ENCODE measurements at regions of chr3 and their contacts with region 1.

Region 1: GRCh38 chr3:179147873-179148615 is at the start of gene PIK3CA:
- DNase-seq: peak; percentile 87 to 99
- ATAC-seq: peak; percentile 80 to 93 (median 85)
- H3K4me3 ChIP-seq: peak within 1 kb of the TSS; percentile 72
- H3K4me3 Mint-ChIP-seq: peak within 1 kb of the TSS; percentile 98
- H3K27ac ChIP-seq: peak within 1 kb of the TSS; percentile 85
- H3K27ac Mint-ChIP-seq: no peak within 1 kb of the TSS
- H3K4me1 ChIP-seq: no peaks in the 10 kb centered on the region
- H3K4me1 Mint-ChIP-seq: peaks cover 30 to 34% of the 10 kb centered on the region in 2 donors
- H3K27me3 ChIP-seq: peaks cover 2% of the 10 kb centered on the region
- H3K27me3 Mint-ChIP-seq: peaks cover 4 to 8% of the 10 kb centered on the region in 2 donors
- CTCF ChIP-seq: no peak
- total RNA-seq, gene PIK3CA: 37.1 to 40.9 (median 40.2) TPM

Region 2: DNA sequence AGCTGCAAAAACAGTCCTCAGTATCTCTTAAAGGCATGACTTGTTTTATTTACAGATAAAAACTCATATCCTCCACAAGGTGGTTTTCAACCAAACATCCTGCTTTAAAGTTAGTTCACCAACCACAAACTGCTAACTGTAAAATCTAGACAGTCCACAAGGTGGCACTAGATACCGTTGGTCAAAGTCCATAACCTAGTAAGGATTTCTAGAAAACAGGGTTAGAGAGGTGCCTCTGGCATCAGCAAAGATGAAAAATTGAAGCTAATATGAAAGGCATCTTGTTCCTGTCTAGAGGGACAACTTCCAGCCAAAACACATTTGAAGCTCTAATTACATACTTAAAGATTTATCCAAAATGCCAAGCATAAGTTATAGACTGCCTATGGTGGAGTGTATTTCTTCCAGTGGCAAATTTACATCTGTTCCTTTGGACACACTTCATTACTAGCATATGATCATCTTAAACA is 132.5 kb before region 1 on chr3:
- intact Hi-C with region 1: loop called (anchors 1 kb)
- DNase-seq: peak in 1 of 2 donors; percentile 90
- ATAC-seq: peak; percentile 96 to 100 (median 99)
- H3K4me3 ChIP-seq: no peak overlapping the region
- H3K4me3 Mint-ChIP-seq: no peak overlapping the region
- H3K27ac ChIP-seq: no peak overlapping the region
- H3K27ac Mint-ChIP-seq: peak overlapping the region; percentile 61 to 64
- H3K4me1 ChIP-seq: no peaks in the 10 kb centered on the region
- H3K4me1 Mint-ChIP-seq: peaks cover 6 to 10% of the 10 kb centered on the region in 2 donors
- H3K27me3 ChIP-seq: no peaks in the 10 kb centered on the region
- H3K27me3 Mint-ChIP-seq: no peaks in the 10 kb centered on the region
- CTCF ChIP-seq: peak; percentile 82

Region 3: DNA sequence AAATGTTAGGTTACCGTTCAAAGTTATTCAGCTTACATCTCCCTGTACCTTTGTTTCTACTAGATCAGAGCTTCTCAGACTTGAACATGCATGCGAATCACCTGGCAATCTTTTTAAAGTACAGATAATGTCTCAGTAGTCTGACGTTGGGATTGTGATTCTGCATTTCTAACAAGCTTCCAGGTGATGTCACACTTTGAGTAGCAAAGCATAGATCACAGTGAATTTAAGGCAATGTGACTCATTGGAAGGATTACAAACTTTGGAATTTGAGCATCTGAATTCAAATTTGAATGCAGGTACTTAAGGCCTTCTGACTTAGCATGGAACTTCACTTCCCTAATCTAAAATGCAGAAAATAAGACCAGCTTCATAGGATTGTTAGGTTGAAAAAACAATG is 65.6 kb before region 1 on chr3:
- intact Hi-C with region 1: no loop called
- DNase-seq: no peak
- ATAC-seq: no peak
- H3K4me3 ChIP-seq: no peak overlapping the region
- H3K4me3 Mint-ChIP-seq: no peak overlapping the region
- H3K27ac ChIP-seq: no peak overlapping the region
- H3K27ac Mint-ChIP-seq: no peak overlapping the region
- H3K4me1 ChIP-seq: no peaks in the 10 kb centered on the region
- H3K4me1 Mint-ChIP-seq: no peaks in the 10 kb centered on the region
- H3K27me3 ChIP-seq: no peaks in the 10 kb centered on the region
- H3K27me3 Mint-ChIP-seq: peaks cover 6 to 21% of the 10 kb centered on the region in 2 donors
- CTCF ChIP-seq: no peak

Region 4: GRCh38 chr3:179166561-179167201 is 18.6 kb after region 1 on chr3:
- intact Hi-C with region 1: no loop called
- DNase-seq: no peak
- ATAC-seq: no peak
- H3K4me3 ChIP-seq: no peak overlapping the region
- H3K4me3 Mint-ChIP-seq: no peak overlapping the region
- H3K27ac ChIP-seq: no peak overlapping the region
- H3K27ac Mint-ChIP-seq: no peak overlapping the region
- H3K4me1 ChIP-seq: no peaks in the 10 kb centered on the region
- H3K4me1 Mint-ChIP-seq: peaks cover 42 to 67% of the 10 kb centered on the region in 2 donors
- H3K27me3 ChIP-seq: no peaks in the 10 kb centered on the region
- H3K27me3 Mint-ChIP-seq: no peaks in the 10 kb centered on the region
- CTCF ChIP-seq: no peak

Region 5: DNA sequence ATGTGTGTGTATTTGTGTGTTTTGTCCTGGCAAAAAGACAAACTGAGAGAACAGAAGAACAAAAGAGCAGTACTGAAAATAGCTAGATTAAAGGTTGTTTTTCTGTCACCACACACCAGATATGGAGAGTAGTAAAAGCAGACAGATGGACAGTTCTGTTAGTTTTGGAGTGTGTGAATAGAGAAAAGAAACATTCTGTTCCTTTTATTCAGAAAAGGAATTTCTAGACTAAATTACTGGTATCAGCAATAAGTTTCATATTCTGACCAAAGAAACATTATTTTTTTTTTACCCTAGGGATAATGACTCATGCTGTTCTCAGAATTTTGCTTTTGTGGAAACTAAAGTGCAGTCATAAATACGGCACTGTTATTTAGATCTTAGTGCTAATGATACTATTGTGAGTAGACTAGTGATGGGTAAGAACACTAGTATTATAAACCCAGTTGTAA is 33.0 kb after region 1 on chr3:
- intact Hi-C with region 1: loop called (anchors 2 kb)
- DNase-seq: no peak
- ATAC-seq: peak in 1 of 3 donors; percentile 55
- H3K4me3 ChIP-seq: no peak overlapping the region
- H3K4me3 Mint-ChIP-seq: no peak overlapping the region
- H3K27ac ChIP-seq: no peak overlapping the region
- H3K27ac Mint-ChIP-seq: no peak overlapping the region
- H3K4me1 ChIP-seq: no peaks in the 10 kb centered on the region
- H3K4me1 Mint-ChIP-seq: peaks cover 36 to 44% of the 10 kb centered on the region in 2 donors
- H3K27me3 ChIP-seq: no peaks in the 10 kb centered on the region
- H3K27me3 Mint-ChIP-seq: no peaks in the 10 kb centered on the region
- CTCF ChIP-seq: no peak

Region 6: DNA sequence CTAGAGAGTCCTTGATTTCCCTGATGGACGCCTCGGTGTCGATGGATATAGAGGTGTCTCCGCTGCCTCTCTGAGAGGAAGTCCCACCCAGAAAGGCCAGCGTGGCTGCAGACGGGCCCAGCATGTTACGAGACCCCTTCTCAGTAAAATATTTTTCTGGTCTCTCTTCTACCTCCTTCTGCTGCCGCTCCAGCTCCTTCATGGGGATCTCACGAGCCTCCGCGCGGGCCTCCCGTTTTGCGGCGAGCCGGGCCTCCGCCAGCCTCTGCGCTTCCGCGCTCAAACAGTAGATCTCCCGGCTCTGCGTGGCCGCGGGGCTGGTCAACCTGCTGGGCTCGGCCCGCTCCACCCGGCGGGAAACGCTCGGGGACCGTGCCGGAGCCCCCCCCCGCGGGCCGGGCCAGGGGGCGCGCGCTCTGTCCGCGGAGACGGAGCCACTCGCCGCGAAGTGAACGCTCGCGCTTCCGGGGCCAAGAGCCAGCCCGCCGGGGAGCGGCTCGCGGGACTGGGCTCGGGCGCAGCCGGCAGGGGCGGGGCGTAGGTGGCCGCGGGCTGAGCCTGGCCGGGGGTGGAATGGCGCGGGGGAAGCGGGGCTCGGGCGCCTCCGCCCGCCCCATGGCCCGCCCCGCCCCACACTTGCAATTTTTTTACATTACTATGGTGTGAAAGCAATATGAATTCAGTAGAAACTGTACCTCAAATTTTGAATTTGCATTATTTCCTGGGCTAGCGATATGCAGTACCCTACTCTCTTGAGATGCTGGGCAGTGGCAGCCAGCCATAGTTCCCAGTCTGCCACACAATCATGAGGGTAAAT is 113.1 kb after region 1 on chr3:
- intact Hi-C with region 1: loop called (anchors 1 kb)
- DNase-seq: peak; percentile 64 to 78
- ATAC-seq: peak; percentile 95 to 99 (median 98)
- H3K4me3 ChIP-seq: peak overlapping the region; percentile 50
- H3K4me3 Mint-ChIP-seq: peak overlapping the region; percentile 80
- H3K27ac ChIP-seq: no peak overlapping the region
- H3K27ac Mint-ChIP-seq: peak overlapping the region in 1 of 2 donors; percentile 27
- H3K4me1 ChIP-seq: peaks cover 9% of the 10 kb centered on the region
- H3K4me1 Mint-ChIP-seq: peaks cover 7 to 13% of the 10 kb centered on the region in 2 donors
- H3K27me3 ChIP-seq: no peaks in the 10 kb centered on the region
- H3K27me3 Mint-ChIP-seq: peaks cover 0 to 4% of the 10 kb centered on the region in 2 donors
- CTCF ChIP-seq: no peak

Region 7: GRCh38 chr3:179347345-179348194 is 199.5 kb after region 1 on chr3 and contains the start of gene MFN1:
- intact Hi-C with region 1: loop called (anchors 1 kb)
- DNase-seq: peak; percentile 81 to 95
- ATAC-seq: peak; percentile 98 to 99 (median 99)
- H3K4me3 ChIP-seq: peak within 1 kb of the TSS; percentile 90
- H3K4me3 Mint-ChIP-seq: peak within 1 kb of the TSS; percentile 95
- H3K27ac ChIP-seq: peak within 1 kb of the TSS; percentile 66
- H3K27ac Mint-ChIP-seq: peak within 1 kb of the TSS; percentile 90 to 98
- H3K4me1 ChIP-seq: peaks cover 10% of the 10 kb centered on the region
- H3K4me1 Mint-ChIP-seq: peaks cover 17 to 18% of the 10 kb centered on the region in 2 donors
- H3K27me3 ChIP-seq: no peaks in the 10 kb centered on the region
- H3K27me3 Mint-ChIP-seq: no peaks in the 10 kb centered on the region
- CTCF ChIP-seq: no peak
- total RNA-seq, gene MFN1: 42.4 to 52.9 (median 47.2) TPM

Region 8: DNA sequence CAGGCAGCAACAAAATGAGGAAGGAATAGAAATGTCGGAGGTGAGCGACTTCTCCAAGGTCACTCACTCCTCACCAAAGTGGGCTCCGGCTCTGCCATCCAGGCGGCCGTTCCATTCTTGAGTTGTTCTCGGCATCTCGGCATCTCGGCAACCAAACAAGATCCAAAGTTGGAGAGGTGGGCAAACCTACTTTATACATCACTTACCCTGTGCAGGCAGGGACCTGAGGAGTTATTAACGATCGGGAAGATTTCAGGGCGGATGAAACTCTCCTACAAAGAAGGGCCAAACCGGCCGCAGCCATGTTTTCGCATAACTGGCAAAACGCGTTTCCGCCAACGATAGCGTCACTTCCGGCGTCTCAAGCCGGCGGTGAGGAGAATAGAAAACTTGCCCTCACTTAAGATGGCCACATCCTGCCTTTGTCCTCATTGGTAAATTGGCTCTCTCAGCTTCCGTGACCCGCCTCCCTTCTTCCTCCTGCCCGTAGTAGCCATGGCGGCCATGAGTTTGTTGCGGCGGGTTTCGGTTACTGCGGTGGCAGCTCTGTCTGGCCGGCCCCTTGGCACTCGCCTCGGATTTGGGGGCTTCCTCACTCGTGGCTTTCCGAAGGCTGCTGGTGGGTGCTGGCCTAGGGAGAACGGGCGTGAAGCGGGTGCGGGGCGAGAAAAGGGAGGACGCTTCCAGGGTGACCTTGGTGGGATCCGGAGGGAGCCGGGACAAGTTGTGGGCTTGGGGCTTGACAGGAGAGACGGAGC is 456.5 kb after region 1 on chr3 and contains the starts of genes MRPL47 and NDUFB5:
- intact Hi-C with region 1: loop called (anchors 2 kb)
- DNase-seq: peak; percentile 86 to 98
- ATAC-seq: peak; percentile 99 to 100 (median 99)
- H3K4me3 ChIP-seq: peak within 1 kb of the TSS; percentile 60
- H3K4me3 Mint-ChIP-seq: peak within 1 kb of the TSS; percentile 100
- H3K27ac ChIP-seq: peak within 1 kb of the TSS; percentile 81
- H3K27ac Mint-ChIP-seq: peak within 1 kb of the TSS; percentile 99 to 100
- H3K4me1 ChIP-seq: peaks cover 22% of the 10 kb centered on the region
- H3K4me1 Mint-ChIP-seq: peaks cover 20 to 41% of the 10 kb centered on the region in 2 donors
- H3K27me3 ChIP-seq: no peaks in the 10 kb centered on the region
- H3K27me3 Mint-ChIP-seq: no peaks in the 10 kb centered on the region
- CTCF ChIP-seq: no peak
- total RNA-seq, gene MRPL47: 23.2 to 30.8 (median 25.5) TPM
- total RNA-seq, gene NDUFB5: 19.0 to 25.4 (median 23.9) TPM

Region 9: GRCh38 chr3:179898024-179898423 is 750.0 kb after region 1 on chr3:
- intact Hi-C with region 1: no loop called
- DNase-seq: peak in 1 of 2 donors; percentile 37
- ATAC-seq: no peak
- H3K4me3 ChIP-seq: no peak overlapping the region
- H3K4me3 Mint-ChIP-seq: no peak overlapping the region
- H3K27ac ChIP-seq: no peak overlapping the region
- H3K27ac Mint-ChIP-seq: no peak overlapping the region
- H3K4me1 ChIP-seq: no peaks in the 10 kb centered on the region
- H3K4me1 Mint-ChIP-seq: no peaks in the 10 kb centered on the region
- H3K27me3 ChIP-seq: peaks cover 4% of the 10 kb centered on the region
- H3K27me3 Mint-ChIP-seq: no peaks in the 10 kb centered on the region
- CTCF ChIP-seq: no peak

Measured in natural killer cell (primary cell).